Calu3 (cell line): ENCODE measurements at regions of chr3 and their contacts with region 1.

Region 1: GRCh38 chr3:189806180-189806951 is 175.2 kb downstream of the TP63 start:
- DNase-seq: no peak
- H3K4me3 Mint-ChIP-seq: no peak overlapping the region
- H3K27ac Mint-ChIP-seq: no peak overlapping the region
- H3K4me1 Mint-ChIP-seq: peaks cover 8% of the 10 kb centered on the region
- H3K27me3 Mint-ChIP-seq: no peaks in the 10 kb centered on the region
- CTCF ChIP-seq: no peak

Region 2: DNA sequence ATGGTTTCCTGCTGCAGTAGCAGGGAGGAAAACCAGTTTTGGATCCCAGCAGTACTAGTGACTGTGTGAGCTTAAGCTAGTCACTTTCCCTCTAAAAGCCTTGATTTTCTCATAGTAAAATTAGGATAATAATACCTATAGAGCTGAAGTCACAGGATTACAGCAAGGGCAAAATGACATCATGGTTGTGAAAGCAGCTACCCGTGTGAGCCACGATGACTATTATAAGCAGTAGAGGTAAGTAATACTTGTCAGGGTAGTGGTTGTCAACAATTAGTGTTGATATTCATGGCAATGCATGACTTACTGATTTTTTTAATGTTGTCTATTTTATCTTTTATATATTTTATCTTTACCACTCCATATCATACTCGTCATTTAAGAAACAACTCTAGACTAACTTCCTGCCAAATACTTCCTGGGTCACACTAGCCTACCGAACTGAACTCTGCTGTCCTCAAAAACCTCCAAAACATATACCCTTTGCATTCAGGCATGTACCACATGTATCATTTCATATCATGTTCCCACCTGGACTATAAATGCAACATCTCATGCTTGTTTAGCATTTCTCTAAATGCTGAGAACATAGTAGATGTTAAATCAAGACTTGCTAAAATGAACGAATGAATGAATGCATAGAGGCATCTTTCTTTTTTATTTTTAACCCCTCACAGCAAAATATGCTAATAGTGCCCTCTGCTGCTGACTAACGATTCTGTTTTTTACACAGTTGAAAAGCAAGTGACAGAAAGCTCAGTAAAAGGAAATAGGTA is 141.8 kb after region 1 on chr3:
- CTCF ChIA-PET with region 1: no interaction called
- intact Hi-C with region 1: no loop called
- DNase-seq: peak; percentile 63
- H3K4me3 Mint-ChIP-seq: no peak overlapping the region
- H3K27ac Mint-ChIP-seq: peak overlapping the region; percentile 23
- H3K4me1 Mint-ChIP-seq: peaks cover 53% of the 10 kb centered on the region
- H3K27me3 Mint-ChIP-seq: no peaks in the 10 kb centered on the region
- CTCF ChIP-seq: peak; percentile 71

Region 3: DNA sequence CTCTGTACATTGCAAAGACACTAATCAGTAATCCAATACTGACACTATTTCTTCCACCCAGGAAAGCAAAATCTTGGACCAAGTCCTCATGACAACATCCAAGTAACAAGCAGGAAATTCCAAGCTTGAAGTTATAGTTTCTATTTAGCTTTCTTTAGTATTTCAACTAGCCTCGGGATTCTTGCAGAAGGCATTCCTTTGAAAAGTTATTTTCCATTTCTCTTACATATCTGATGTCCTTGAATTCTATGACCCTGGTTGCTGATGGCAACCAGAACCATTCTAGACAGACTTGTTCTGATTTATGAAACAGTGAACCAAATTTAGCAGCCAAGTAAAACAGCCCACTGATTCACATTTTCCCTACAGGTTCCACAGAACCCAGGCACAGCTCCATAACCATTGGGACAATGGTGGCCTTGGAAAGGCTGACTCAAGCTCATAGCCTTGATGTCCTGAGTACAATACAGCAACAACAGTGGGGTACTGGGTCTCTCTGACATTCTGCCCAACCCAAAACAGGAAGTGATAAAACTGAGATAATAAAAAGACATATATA is 287.9 kb after region 1 on chr3:
- CTCF ChIA-PET with region 1: interaction called, 10 read pairs
- intact Hi-C with region 1: no loop called
- DNase-seq: no peak
- H3K4me3 Mint-ChIP-seq: no peak overlapping the region
- H3K27ac Mint-ChIP-seq: no peak overlapping the region
- H3K4me1 Mint-ChIP-seq: no peaks in the 10 kb centered on the region
- H3K27me3 Mint-ChIP-seq: no peaks in the 10 kb centered on the region
- CTCF ChIP-seq: no peak